Activated CD4-positive, alpha-beta memory T cell treated with anti-CD3 and anti-CD28 coated beads, Interleukin-2, amount 10 ng/mL, durations not matched to agents 7 days and 5 days (primary cell): ENCODE measurements at regions of chr16 and their contacts with region 1.

Region 1: DNA sequence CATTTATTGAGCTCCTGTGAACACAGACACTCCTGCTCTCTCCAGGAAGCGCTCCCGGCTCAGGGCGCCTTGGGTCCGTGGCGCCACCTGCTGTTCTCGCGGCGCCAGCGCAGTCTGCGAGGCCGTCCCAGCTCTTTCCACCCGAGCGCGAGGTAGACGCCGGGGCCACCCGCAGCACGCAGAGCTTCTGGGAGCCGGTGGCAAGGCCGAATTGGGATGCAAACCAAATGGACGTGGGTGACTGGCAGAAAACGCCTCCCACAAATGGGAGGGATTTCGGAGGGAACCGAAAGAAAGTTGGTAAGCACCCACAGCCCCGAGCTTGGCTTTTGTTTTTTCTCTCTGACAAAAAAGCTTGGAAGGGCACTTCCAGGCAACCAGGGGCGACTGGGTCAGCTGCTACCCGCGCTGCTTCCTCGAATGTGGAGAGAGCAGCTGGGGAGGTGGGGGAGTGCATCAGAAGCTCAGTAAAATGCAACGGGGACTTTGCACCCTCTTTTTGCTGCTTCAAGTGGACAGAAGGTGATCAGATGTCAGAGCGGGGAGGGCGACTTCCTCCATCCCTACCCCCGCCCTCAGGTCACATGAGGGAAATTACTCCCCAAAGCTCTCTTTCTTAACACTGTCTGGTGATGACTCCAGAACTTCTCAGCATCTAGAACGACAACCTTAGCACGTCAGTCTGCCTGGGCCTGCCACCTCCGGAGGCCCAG is 13.5 kb upstream of the N4BP1 start:
- DNase-seq: peak; percentile 85
- H3K4me3 Mint-ChIP-seq: peak overlapping the region; percentile 71
- H3K27ac Mint-ChIP-seq: no peak overlapping the region
- H3K4me1 Mint-ChIP-seq: peaks cover 36% of the 10 kb centered on the region
- H3K27me3 Mint-ChIP-seq: peaks cover 10% of the 10 kb centered on the region

Region 2: DNA sequence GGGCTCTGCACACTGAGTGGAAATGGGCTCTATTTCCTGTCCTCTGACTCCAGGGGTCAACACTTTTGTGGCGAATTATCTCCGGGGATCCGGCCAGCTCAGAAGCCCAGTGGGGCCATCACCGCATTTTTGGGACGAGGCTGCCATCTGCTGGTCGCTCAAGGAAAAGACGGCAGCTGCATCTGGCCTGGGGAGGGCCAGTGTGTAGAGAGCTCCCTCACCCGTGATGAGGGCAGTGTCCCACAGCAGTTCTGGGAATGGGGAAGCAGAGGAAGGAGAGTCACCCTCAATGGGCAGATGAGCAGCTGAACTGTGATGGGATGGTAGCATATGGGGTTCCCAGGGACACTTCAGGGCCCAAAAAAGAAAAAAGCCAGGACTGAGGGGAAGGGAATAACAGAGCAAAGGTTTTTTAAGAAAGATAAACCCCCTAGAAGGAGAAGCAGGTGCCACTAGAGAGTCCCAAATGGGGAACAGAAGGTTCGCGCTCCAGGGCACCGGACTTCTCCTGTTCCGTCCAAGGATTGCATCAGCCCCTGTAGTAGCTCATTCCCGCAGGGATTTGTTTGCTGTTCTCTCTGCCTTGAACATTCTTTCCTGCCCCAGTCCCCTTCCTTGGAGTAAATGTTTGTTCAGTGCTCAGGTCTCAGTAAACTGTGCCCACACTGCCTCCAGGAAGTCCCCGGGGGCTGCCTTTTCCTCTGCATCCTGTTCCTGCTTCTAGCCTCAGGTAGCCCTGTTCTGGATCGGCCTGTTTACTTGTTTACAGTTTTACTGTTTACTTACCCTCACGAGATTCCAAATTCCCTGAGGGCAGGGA is 458.3 kb before region 1 on chr16:
- CTCF ChIA-PET with region 1: interaction called, 10 read pairs
- POLR2A ChIA-PET with region 1: no interaction called
- DNase-seq: peak; percentile 70
- H3K4me3 Mint-ChIP-seq: no peak overlapping the region
- H3K27ac Mint-ChIP-seq: no peak overlapping the region
- H3K4me1 Mint-ChIP-seq: peaks cover 12% of the 10 kb centered on the region
- H3K27me3 Mint-ChIP-seq: peaks cover 4% of the 10 kb centered on the region

Region 3: DNA sequence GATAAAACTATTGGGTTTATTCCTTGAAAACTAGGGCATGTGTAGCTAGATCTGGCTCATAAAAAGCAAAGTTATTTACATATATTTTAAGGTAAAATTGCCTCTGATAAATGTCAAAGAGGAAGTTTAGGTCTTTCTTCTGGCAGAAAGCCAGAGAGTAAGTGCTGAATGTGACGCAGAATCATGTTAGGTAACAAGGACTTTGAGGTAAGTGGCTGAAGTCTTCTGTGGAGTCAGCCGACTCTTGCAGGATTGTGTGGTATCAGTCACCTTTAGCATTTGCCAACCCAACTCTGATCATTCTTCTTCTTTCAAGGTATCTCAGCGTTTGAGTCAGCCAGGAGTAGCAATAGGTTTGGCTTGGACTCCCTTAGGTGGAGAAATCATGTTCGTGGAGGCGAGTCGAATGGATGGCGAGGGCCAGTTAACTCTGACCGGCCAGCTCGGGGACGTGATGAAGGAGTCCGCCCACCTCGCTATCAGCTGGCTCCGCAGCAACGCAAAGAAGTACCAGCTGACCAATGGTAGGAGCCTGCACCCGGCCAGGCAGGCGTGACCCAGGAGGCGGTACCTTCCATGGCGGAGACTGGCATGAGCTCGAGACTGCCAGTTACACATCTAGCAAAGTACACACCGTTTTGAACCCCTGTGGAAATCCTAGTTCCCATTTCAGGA is 276.1 kb before region 1 on chr16:
- CTCF ChIA-PET with region 1: interaction called, 116 read pairs
- POLR2A ChIA-PET with region 1: no interaction called
- DNase-seq: no peak
- H3K4me3 Mint-ChIP-seq: no peak overlapping the region
- H3K27ac Mint-ChIP-seq: no peak overlapping the region
- H3K4me1 Mint-ChIP-seq: no peaks in the 10 kb centered on the region
- H3K27me3 Mint-ChIP-seq: no peaks in the 10 kb centered on the region

Region 4: GRCh38 chr16:48385272-48386150 is 237.9 kb before region 1 on chr16 and contains the start of gene SIAH1:
- CTCF ChIA-PET with region 1: interaction called, 7 read pairs
- POLR2A ChIA-PET with region 1: interaction called, 12 read pairs
- DNase-seq: peak; percentile 88
- H3K4me3 Mint-ChIP-seq: peak within 1 kb of the TSS; percentile 88
- H3K27ac Mint-ChIP-seq: peak within 1 kb of the TSS; percentile 85
- H3K4me1 Mint-ChIP-seq: peaks cover 22% of the 10 kb centered on the region
- H3K27me3 Mint-ChIP-seq: no peaks in the 10 kb centered on the region
- total RNA-seq, gene SIAH1: 16.1 to 16.5 TPM

Region 5: DNA sequence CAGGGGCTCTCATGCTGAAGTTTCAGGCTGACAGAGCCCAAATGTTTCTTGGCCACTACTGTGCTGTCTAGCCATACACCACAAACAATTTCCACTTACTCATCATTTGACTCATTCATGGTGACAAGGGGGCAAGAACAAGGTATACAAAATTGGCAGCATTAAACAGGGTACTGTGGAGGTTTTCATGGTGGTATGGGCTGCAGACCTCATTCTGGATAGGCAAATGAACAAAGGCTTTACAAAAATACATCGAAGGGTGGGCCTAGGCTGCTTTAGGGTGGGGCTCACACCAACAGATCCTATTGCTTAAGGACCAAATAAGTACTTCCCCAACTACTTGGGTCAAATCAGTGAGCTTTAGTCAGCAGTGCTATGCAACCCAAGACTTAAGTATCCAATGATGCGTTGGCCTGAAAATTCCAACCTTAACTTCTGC is 66.5 kb before region 1 on chr16:
- CTCF ChIA-PET with region 1: interaction called, 53 read pairs
- POLR2A ChIA-PET with region 1: interaction called, 7 read pairs
- DNase-seq: no peak
- H3K4me3 Mint-ChIP-seq: peak overlapping the region; percentile 5
- H3K27ac Mint-ChIP-seq: peak overlapping the region; percentile 63
- H3K4me1 Mint-ChIP-seq: peaks cover 78% of the 10 kb centered on the region
- H3K27me3 Mint-ChIP-seq: no peaks in the 10 kb centered on the region

Region 6: DNA sequence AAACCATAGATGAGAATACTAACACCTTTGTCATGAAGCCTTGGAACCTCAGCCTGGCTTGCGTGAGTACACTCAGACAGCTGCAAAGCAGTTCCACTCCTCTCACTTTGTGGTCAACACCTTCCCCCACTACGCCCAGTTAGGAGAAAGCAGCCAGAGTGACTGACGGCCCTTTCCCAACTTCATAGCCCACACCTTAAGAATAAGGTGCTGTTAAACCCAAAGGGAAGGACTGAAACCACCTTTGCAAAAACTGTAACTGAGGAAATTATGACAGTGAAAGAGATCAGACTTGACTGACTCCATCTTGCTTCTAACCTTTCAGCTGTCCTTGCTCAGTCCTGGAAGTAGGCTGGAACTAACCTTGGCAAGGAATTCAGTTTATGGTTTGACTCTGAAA is 27.1 kb before region 1 on chr16:
- CTCF ChIA-PET with region 1: interaction called, 10 read pairs
- POLR2A ChIA-PET with region 1: interaction called, 3 read pairs
- DNase-seq: peak; percentile 50
- H3K4me3 Mint-ChIP-seq: no peak overlapping the region
- H3K27ac Mint-ChIP-seq: peak overlapping the region; percentile 66
- H3K4me1 Mint-ChIP-seq: peaks cover 43% of the 10 kb centered on the region
- H3K27me3 Mint-ChIP-seq: no peaks in the 10 kb centered on the region